ENCODE measurements at regions of chr11 and their contacts with region 1.

Region 1: DNA sequence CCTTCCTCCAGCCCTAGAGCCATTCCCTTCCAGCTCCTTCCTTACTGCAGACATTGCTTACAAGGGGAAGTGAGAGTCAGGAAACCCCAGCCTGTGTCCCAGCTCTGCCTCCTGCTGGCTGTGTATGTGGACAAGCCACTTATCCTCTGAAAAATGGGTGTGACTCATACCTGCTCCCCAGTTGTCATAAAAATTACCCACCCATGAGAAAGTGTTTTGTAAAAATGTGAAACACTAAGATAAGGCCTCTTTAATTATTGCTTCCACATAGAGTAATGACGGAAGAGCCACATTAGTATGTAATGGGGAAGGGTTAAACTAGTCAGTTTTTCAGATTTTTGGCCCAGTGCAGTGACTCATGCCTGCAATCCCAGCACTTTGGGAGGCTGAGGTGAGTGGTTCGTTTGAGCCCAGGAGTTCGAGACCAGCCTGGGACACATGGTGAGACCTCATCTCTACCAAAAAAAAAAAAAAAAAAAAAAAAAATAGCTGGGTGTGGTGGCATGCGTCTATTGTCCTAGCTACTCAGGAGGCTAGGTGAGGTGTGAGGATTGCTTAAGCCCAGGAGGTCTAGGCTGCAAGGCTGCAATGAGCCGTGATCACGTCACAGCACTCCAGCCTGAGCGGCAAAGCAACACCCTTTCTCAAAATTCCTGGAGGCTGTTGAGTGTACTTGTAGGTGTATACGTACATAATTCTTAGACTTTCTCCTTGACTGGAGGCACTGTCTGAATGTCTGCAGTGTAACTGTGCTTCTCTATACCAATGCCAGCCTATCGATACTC is 84.9 kb downstream of the CTTN start:
- DNase-seq: peak; percentile 68 to 98
- H3K4me3 ChIP-seq: peak overlapping the region; percentile 40; the same call in 1 of the 2 replicates
- H3K27ac ChIP-seq: peak overlapping the region; percentile 99
- H3K4me1 ChIP-seq: peaks cover 49% of the 10 kb centered on the region
- H3K27me3 ChIP-seq: no peaks in the 10 kb centered on the region
- CTCF ChIP-seq: peak; percentile 80

Region 2: DNA sequence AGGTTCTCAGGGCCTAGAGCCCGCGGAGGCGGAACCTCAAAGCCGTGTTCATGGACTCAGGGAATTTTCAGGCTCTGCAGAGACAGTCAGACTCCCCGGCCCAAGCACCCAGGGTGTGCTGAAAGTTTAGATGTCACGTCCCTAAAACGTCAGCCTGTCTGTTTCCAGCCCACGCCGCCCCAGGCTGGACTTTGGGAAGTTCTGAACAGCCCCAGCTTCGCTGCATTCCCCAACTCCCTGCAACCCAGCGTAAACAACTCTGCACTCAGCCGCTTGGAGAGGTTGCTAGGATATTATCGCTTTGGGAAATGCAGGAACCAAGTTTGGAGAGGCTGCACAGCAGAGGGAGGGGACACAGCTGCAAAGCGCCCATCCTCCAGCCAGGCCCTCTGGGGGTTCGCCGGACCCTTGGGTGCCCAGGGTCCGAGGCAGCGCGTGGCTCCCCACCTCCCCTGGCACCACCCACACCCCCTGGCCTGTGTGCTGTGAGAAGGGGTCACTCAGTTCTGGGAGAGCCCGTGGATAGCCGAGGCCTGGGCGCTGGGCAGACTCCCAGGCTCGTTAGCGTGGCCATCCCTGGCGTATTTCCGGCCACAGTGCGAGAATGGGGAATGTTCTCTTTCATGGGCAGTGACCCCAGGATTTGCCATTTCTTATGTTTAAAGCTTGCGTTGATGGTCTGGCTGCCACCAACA is 543.6 kb before region 1 on chr11:
- CTCF ChIA-PET with region 1: no interaction called
- POLR2A ChIA-PET with region 1: no interaction called
- intact Hi-C with region 1: no loop called
- DNase-seq: no peak
- H3K4me3 ChIP-seq: no peak overlapping the region
- H3K27ac ChIP-seq: no peak overlapping the region
- H3K4me1 ChIP-seq: peaks cover 15% of the 10 kb centered on the region
- H3K27me3 ChIP-seq: no peaks in the 10 kb centered on the region
- CTCF ChIP-seq: no peak

Region 3: GRCh38 chr11:70405682-70406395 is 77.4 kb before region 1 on chr11:
- CTCF ChIA-PET with region 1: no interaction called
- POLR2A ChIA-PET with region 1: no interaction called
- intact Hi-C with region 1: no loop called
- DNase-seq: no peak
- H3K4me3 ChIP-seq: no peak overlapping the region
- H3K27ac ChIP-seq: no peak overlapping the region
- H3K4me1 ChIP-seq: peaks cover 21% of the 10 kb centered on the region
- H3K27me3 ChIP-seq: no peaks in the 10 kb centered on the region
- CTCF ChIP-seq: no peak

Region 4: GRCh38 chr11:70467201-70468085 is 15.8 kb before region 1 on chr11:
- CTCF ChIA-PET with region 1: interaction called, 10 read pairs
- POLR2A ChIA-PET with region 1: no interaction called
- intact Hi-C with region 1: no loop called
- DNase-seq: peak in 1 of 2 experiments; percentile 70
- H3K4me3 ChIP-seq: no peak overlapping the region
- H3K27ac ChIP-seq: no peak overlapping the region
- H3K4me1 ChIP-seq: no peaks in the 10 kb centered on the region
- H3K27me3 ChIP-seq: no peaks in the 10 kb centered on the region
- CTCF ChIP-seq: peak; percentile 99

Region 5: GRCh38 chr11:70517986-70518907 is 35.0 kb after region 1 on chr11:
- CTCF ChIA-PET with region 1: interaction called, 6 read pairs
- POLR2A ChIA-PET with region 1: no interaction called
- intact Hi-C with region 1: loop called (anchors 1 kb)
- DNase-seq: peak in 1 of 2 experiments; percentile 75
- H3K4me3 ChIP-seq: no peak overlapping the region
- H3K27ac ChIP-seq: no peak overlapping the region
- H3K4me1 ChIP-seq: peaks cover 5% of the 10 kb centered on the region; the same call in 1 of the 2 replicates
- H3K27me3 ChIP-seq: no peaks in the 10 kb centered on the region
- CTCF ChIP-seq: no peak

Region 6: GRCh38 chr11:70544809-70545537 is 61.7 kb after region 1 on chr11:
- CTCF ChIA-PET with region 1: no interaction called
- POLR2A ChIA-PET with region 1: interaction called, 4 read pairs
- intact Hi-C with region 1: loop called (anchors 2 kb)
- DNase-seq: peak in 1 of 2 experiments; percentile 74
- H3K4me3 ChIP-seq: no peak overlapping the region
- H3K27ac ChIP-seq: no peak overlapping the region
- H3K4me1 ChIP-seq: no peaks in the 10 kb centered on the region
- H3K27me3 ChIP-seq: no peaks in the 10 kb centered on the region
- CTCF ChIP-seq: no peak

Region 7: DNA sequence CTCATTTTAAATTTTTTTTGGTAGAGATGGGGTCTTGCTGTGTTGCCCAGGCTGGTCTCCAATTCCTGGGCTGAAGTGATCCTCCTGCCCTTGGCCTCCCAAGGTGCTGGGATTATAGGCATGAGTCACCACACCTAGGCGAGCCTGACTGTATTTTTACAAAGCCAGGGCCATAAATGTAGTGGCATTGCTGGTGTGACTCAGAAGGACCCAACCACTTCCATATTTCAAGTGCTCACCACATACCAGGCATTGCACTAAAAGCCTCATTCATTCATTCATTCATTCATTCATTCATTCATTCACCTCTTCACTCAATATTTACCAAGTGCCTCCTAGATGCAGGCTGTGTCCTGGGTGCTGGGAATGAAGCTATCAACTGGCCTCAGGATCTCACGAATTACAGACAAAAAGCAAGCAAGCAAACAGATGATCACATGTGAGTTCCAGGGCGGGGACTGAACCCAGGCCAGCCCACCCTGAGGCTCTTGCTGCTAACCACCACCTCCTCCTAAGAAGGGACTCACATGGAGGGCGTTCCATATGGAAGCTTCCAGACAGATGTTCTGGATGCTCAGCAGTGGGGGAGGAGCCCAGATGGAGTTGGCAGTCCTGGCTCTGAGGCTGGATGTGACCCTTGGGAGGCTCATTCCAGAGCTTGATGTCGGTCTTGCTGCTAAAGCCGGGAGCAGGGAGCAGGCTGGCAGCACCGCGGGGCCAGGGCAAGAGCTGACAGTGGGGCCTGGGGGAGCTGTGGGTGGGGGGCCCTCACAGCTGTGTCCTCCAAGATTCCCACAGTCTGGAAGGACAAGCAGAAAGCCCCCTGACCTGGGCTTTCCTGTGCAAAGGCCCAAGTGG is 73.8 kb after region 1 on chr11:
- CTCF ChIA-PET with region 1: no interaction called
- POLR2A ChIA-PET with region 1: no interaction called
- intact Hi-C with region 1: loop called (anchors 5 kb)
- DNase-seq: peak; percentile 67 to 90
- H3K4me3 ChIP-seq: no peak overlapping the region
- H3K27ac ChIP-seq: no peak overlapping the region
- H3K4me1 ChIP-seq: no peaks in the 10 kb centered on the region
- H3K27me3 ChIP-seq: no peaks in the 10 kb centered on the region
- CTCF ChIP-seq: no peak

Region 8: DNA sequence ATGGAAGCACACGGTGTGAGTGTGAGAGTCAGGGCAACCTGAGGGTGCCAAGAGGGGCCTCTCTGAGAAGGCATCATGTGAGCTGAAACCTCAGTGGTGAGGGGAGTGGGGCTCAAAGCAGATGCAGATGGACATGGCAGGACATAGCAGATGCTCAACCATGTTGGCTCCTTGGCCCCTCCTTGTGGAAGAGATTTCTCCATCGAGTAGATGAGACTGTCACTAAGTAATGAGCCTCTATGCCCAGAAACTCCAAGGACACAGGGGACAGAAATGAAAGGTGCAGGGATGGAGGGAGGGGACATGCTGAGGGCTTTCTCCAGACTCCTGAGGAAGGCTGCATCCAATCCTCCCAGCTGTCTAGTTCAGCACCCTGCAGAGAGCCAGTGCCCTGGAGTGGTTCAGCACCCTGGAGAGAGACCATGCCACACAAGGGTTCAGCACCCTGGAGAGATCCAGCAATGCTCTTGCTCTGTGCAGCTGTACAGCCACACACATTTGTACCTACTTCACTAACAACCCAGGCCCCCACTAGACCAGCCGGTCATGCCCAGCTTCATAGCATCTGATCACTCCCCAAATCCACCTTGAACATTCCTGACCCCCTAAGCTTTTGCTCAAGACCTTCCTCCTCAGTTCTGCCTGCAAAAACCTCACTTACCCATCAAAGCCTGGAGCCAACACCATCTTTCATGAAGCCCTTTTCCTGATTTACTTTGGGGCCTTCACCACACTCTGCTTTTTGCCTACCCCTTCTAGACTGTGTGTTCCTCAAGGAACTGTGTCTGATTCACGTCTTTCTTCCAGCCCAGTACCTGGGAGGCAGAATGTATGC is 167.0 kb after region 1 on chr11:
- CTCF ChIA-PET with region 1: no interaction called
- POLR2A ChIA-PET with region 1: no interaction called
- intact Hi-C with region 1: loop called (anchors 10 kb)
- DNase-seq: peak; percentile 69 to 80
- H3K4me3 ChIP-seq: no peak overlapping the region
- H3K27ac ChIP-seq: no peak overlapping the region
- H3K4me1 ChIP-seq: no peaks in the 10 kb centered on the region
- H3K27me3 ChIP-seq: no peaks in the 10 kb centered on the region
- CTCF ChIP-seq: no peak

Region 9: GRCh38 chr11:70755410-70756161 is 272.3 kb after region 1 on chr11:
- CTCF ChIA-PET with region 1: interaction called, 15 read pairs
- POLR2A ChIA-PET with region 1: no interaction called
- intact Hi-C with region 1: no loop called
- DNase-seq: peak; percentile 60 to 84
- H3K4me3 ChIP-seq: no peak overlapping the region
- H3K27ac ChIP-seq: no peak overlapping the region
- H3K4me1 ChIP-seq: peaks cover 9% of the 10 kb centered on the region
- H3K27me3 ChIP-seq: no peaks in the 10 kb centered on the region
- CTCF ChIP-seq: peak; percentile 92